HEK293T (cell line): ENCODE measurements at regions of chr17 and their contacts with region 1.

Region 1: DNA sequence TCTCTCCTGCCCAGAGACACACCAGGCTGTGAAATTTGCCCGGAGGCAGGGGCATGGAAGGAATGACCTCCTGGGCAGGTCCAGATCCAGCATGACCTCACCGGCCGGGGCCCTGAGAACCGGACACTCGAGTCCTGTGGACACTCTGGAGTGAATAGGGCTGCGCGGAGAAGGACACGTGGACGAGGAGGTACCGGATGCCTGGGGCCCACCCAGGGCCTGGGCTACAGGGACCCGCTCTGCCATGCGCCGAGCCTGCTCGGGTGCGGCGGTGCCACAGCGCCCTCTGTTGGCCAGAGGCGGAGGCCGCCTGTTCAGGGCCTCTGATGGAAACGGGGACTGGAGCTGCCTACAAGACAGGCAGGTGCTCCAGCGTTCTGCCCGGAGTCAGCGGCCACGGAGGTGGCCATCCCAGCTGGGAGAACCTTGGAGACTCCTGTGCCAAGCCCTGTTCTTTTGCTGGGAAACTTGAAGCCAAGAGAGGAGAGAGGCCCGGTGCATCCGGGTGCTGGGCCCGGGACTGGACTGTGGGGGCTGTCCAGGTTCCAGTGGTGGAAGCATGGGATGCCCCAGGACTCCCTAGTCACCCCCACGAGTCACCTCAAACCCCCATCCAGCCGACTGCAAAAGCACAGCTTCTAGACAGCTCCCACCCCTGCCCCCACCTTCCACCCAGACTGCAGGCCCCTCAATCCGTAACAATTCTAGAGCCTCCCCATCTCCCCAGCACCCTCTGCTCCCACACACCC is 19.3 kb upstream of the NXPH3 start:
- DNase-seq: peak; percentile 93

Region 2: GRCh38 chr17:49407981-49408501 is 148.4 kb before region 1 on chr17:
- CTCF ChIA-PET with region 1: interaction called, 41 read pairs
- POLR2A ChIA-PET with region 1: interaction called, 3 read pairs
- DNase-seq: peak; percentile 90

Region 3: GRCh38 chr17:49434821-49435670 is 121.4 kb before region 1 on chr17:
- CTCF ChIA-PET with region 1: interaction called, 63 read pairs
- POLR2A ChIA-PET with region 1: no interaction called
- DNase-seq: peak; percentile 84

Region 4: DNA sequence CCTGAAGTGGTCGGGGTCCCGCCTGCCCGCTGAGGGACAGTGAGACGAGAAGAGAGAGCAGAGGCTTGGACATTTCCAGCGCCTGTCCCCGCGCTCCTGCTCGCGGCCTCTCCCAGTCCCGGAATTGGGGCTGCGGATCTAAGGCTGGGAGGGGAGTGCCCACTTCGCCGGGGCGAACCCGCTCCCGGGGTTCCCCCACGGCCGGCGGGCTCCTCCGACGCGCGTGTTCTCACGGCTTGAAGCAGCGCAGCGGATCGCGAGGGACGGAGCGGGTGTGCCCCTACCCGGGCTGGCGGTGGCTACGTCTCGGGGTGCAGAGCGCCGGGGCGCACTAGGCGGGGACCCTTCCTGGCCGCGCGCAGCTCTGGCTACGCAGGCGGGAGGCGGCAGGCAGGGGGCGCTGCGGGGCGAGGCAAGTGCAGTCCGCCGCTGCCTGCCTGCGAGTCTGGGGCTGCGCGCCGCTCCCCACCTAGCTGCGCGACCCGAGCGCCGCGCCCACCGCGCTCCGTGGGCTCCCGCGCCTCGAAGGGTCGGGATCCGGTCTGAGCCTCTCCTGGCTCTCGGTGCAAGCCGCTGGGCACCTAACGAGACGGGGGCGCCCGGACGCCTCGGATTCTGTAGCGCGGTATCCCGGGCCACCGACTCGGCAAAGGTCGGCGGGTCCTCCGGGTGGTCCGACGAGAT is 60.1 kb before region 1 on chr17:
- CTCF ChIA-PET with region 1: interaction called, 17 read pairs
- POLR2A ChIA-PET with region 1: interaction called, 3 read pairs
- DNase-seq: peak; percentile 87